ENCODE measurements at regions of chr3 and their contacts with region 1.

Region 1: DNA sequence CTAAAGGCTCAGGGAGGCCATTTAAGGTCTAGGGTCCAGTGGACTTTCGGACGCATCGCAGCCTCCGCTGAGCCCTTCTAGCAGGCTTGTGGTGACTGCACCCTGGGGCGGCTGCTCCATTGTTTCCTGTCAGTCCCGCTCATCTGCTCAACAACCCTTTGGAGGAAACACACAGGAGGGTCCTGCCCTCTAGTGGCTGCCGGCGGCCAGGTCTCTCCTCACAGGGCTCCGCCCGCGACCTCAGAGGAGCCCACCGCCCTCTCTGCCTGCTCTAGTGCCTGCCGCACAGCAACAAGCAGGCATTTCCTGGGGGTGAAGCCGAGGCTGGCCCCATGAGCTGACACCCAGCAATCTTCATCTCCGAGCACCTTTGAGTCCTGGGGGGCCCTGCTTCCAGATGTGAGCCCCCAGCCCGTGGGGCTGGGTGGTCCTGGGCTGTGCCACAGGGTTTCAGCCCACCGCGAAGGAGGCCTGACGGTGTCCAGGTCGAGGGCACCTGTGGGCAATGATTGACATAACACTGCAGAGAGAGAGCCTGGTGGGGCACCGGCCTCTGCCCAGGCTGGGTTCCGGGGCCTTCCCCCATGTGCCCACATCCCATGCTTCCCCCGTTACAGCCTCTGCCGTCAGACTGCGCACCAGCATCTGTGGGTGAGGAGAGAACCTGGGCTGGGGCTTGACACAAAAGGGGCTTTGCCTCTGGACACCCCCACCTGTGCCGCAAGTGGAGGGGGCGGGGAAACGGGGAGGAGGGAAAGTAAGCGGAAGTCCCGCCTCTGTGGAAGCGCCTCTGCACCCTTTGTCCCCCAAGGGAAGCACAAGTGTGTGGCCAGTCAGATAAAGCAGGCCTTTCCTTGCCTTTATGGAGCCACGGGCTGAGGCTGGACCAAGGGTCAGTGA is 27.0 kb upstream of the SFMBT1 start:
- DNase-seq: peak; percentile 91 to 96
- ATAC-seq: peak; percentile 92
- H3K4me3 ChIP-seq: peak overlapping the region; percentile 24 to 57
- H3K27ac ChIP-seq: peak overlapping the region in 1 of 2 donors; percentile 11
- H3K4me1 ChIP-seq: no peaks in the 10 kb centered on the region
- H3K27me3 ChIP-seq: no peaks in the 10 kb centered on the region

Region 2: GRCh38 chr3:52742418-52743041 is 330.4 kb before region 1 on chr3:
- intact Hi-C with region 1: loop called (anchors 2 to 5 kb)
- DNase-seq: no peak
- ATAC-seq: no peak
- H3K4me3 ChIP-seq: no peak overlapping the region
- H3K27ac ChIP-seq: no peak overlapping the region
- H3K4me1 ChIP-seq: no peaks in the 10 kb centered on the region
- H3K27me3 ChIP-seq: no peaks in the 10 kb centered on the region

Region 3: DNA sequence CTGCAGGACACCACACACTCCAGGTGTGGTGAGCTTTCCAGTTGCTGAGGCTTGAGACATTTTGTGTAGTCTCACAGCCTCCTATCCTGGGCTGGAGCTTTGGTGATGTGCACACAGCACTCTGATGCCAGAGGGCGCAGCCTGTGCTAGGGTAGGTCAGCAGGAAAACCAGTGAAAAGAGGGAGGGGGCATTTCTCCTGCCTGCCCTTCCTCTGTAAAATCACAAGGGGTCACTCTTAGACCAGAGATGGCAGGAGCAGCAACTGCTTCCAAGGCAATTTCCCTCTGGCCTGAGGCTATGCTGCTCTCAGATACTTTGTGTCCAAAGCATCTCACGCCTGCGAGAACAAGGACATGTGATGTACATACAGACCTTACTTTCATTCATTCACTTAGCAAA is 221.6 kb before region 1 on chr3:
- intact Hi-C with region 1: loop called (anchors 2 to 5 kb)
- DNase-seq: no peak
- ATAC-seq: no peak
- H3K4me3 ChIP-seq: no peak overlapping the region
- H3K27ac ChIP-seq: no peak overlapping the region
- H3K4me1 ChIP-seq: no peaks in the 10 kb centered on the region
- H3K27me3 ChIP-seq: no peaks in the 10 kb centered on the region

Region 4: DNA sequence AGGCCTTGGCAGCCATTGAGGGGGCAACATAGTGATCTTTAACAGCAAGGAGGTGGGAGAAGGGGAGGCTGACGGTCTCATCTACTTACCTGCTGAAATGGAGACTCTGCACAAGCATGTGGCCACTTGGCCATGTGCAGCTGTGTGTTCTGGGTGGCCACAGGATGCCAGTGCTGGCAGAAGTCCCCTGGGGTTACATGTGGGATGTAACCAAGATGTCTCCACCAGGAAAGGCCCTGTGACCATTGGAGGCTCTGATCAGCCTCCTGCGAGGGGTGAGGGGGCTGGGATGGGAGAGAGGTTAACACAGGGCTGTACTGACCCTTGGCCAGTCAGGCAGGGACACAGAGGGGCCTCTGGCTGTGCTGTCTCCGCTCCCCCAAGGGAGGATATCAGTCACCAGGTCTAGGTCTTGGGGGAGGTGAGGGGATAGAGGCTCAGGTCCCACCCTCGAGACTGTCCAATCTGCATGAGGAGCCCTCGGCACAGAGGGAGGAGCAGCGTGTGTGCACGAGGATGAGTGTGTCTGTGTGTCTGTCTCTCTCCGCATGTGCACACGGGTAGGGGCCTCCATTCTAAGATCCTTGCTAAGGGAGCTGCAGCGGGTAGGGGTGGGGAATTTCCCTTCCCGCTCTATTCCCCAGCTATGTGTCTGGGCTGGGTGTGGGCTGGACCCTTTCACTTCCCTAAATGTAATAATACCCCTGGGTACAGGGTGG is 107.6 kb after region 1 on chr3:
- intact Hi-C with region 1: no loop called
- DNase-seq: no peak
- ATAC-seq: no peak
- H3K4me3 ChIP-seq: no peak overlapping the region
- H3K27ac ChIP-seq: no peak overlapping the region
- H3K4me1 ChIP-seq: no peaks in the 10 kb centered on the region
- H3K27me3 ChIP-seq: no peaks in the 10 kb centered on the region

Measured in aorta (tissue), 5 donors.